Activated CD8-positive, alpha-beta T cell treated with anti-CD3 and anti-CD28 coated beads, Interleukin-2, amount 10 ng/mL, durations not matched to agents 7 days and 5 days (primary cell): ENCODE measurements at regions of chr13 and their contacts with region 1.

Region 1: GRCh38 chr13:91406619-91407018 is 8.2 kb downstream of the GPC5 start:
- DNase-seq: peak; percentile 60
- ATAC-seq: peak; percentile 67
- H3K4me3 Mint-ChIP-seq: no peak overlapping the region
- H3K27ac Mint-ChIP-seq: no peak overlapping the region
- H3K4me1 Mint-ChIP-seq: no peaks in the 10 kb centered on the region
- H3K27me3 Mint-ChIP-seq: peaks cover 43% of the 10 kb centered on the region

Region 2: GRCh38 chr13:91313103-91313502 is 93.5 kb before region 1 on chr13:
- CTCF ChIA-PET with region 1: interaction called, 19 read pairs
- POLR2A ChIA-PET with region 1: no interaction called
- DNase-seq: peak; percentile 44
- ATAC-seq: peak; percentile 73
- H3K4me3 Mint-ChIP-seq: peak overlapping the region; percentile 22
- H3K27ac Mint-ChIP-seq: no peak overlapping the region
- H3K4me1 Mint-ChIP-seq: peaks cover 17% of the 10 kb centered on the region
- H3K27me3 Mint-ChIP-seq: peaks cover 19% of the 10 kb centered on the region

Region 3: DNA sequence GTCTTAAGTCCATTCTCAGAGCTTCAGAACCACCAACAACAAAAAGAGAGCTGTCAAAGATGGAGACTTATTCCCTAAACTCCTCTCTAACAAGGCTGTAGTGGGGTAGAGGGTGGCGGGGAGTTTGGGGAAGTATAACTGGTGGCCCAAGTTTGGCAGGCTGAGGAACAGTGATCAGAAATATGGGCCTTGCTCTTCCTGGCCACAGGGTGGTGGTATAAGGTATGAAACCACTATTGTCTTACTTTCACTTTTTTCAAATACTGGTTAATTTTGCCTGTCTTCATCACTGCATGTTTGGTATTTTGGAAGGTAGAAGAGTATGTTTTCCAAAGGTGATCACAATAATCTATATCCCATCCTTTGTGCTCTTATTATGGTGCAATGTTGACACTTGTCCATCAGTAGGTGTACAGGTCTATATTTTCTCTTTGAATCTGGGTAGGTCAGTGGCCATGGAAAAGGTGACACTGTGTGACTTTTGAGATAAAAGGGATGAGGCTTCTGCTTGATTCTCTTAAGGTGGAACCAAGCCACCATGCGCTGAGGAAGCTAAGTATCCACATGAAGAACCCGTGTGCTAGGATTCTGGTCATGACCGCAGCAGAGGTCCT is 31.4 kb before region 1 on chr13:
- CTCF ChIA-PET with region 1: interaction called, 24 read pairs
- POLR2A ChIA-PET with region 1: no interaction called
- DNase-seq: peak; percentile 39
- ATAC-seq: peak; percentile 72
- H3K4me3 Mint-ChIP-seq: no peak overlapping the region
- H3K27ac Mint-ChIP-seq: no peak overlapping the region
- H3K4me1 Mint-ChIP-seq: peaks cover 10% of the 10 kb centered on the region
- H3K27me3 Mint-ChIP-seq: peaks cover 13% of the 10 kb centered on the region

Region 4: DNA sequence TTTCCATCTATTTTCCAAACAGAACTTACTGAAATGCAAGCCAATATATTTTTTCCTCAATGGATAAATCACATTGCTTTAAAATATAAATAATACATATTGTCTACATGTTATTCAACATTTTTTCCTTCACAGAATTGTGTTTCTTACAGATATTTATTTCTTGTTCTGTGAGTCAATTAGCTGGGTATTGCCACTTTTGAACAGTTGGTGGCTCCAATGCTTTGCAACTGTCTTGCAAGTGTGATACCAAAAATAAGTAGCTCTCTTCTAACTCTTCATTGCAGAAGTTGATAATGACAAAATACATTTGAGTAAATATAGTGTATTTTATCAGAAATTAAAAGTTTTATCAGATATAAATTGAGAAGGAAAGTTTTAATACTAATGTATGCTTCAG is 25.2 kb before region 1 on chr13:
- CTCF ChIA-PET with region 1: interaction called, 24 read pairs
- POLR2A ChIA-PET with region 1: no interaction called
- DNase-seq: no peak
- ATAC-seq: no peak
- H3K4me3 Mint-ChIP-seq: no peak overlapping the region
- H3K27ac Mint-ChIP-seq: no peak overlapping the region
- H3K4me1 Mint-ChIP-seq: no peaks in the 10 kb centered on the region
- H3K27me3 Mint-ChIP-seq: peaks cover 18% of the 10 kb centered on the region